Dendritic cell treated with granulocyte-macrophage colony-stimulating factor and Interleukin-4, amounts not matched to agents 40 ng/mL and 50 ng/mL, for 4 days (primary cell): ENCODE measurements at regions of chr16 and their contacts with region 1.

Region 1: DNA sequence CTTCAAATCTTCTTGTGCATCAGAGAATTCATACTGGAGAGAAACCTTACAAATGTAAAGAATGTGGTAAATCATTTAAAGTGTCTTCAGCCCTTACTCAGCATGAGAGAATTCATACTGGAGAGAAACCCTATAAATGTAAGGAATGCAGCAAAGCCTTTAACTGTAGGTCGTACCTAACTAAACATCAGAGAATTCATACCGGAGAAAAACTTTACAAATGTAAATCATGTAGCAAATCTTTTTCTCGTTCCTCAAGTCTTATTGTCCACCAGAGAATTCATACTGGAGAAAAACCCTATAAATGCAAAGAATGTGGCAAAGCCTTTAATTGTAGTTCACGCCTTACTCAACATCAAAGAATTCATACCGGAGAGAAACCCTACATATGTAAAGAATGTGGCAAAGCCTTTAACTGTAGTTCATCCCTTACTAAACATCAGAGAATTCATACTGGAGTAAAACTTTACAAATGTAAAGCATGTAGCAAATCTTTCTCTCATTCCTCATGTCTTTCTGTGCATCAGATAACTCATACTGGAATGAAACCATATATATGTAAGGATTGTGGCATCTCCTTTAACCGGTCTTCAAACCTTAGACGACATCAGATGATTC is 118.5 kb upstream of the ZNF267 start:
- H3K4me3 Mint-ChIP-seq: no peak overlapping the region
- H3K27ac Mint-ChIP-seq: no peak overlapping the region
- H3K4me1 Mint-ChIP-seq: no peaks in the 10 kb centered on the region
- H3K27me3 Mint-ChIP-seq: no peaks in the 10 kb centered on the region

Region 2: GRCh38 chr16:31785126-31785525 is 30.0 kb after region 1 on chr16:
- intact Hi-C with region 1: loop called (anchors 1 kb)
- H3K4me3 Mint-ChIP-seq: no peak overlapping the region
- H3K27ac Mint-ChIP-seq: no peak overlapping the region
- H3K4me1 Mint-ChIP-seq: no peaks in the 10 kb centered on the region
- H3K27me3 Mint-ChIP-seq: no peaks in the 10 kb centered on the region